ENCODE measurements at regions of chr15 and their contacts with region 1.

Region 1: GRCh38 chr15:45705510-45706473 is 71.0 kb downstream of the SQOR start:
- DNase-seq: peak; percentile 68 to 81 (median 70)
- ATAC-seq: peak; percentile 88 to 96 (median 92)
- H3K4me3 ChIP-seq: peak overlapping the region; percentile 16 to 58 (median 52)
- H3K27ac ChIP-seq: no peak overlapping the region
- H3K4me1 ChIP-seq: no peaks in the 10 kb centered on the region
- H3K27me3 ChIP-seq: no peaks in the 10 kb centered on the region
- CTCF ChIP-seq: peak; percentile 85 to 92 (median 91)
- POLR2A ChIP-seq: no peak

Region 2: GRCh38 chr15:45780352-45780751 is 74.6 kb after region 1 on chr15:
- intact Hi-C with region 1: loop called in 1 of 2 experiments (anchors 10 kb)
- DNase-seq: no peak
- ATAC-seq: no peak
- H3K4me3 ChIP-seq: no peak overlapping the region
- H3K27ac ChIP-seq: no peak overlapping the region
- H3K4me1 ChIP-seq: no peaks in the 10 kb centered on the region
- H3K27me3 ChIP-seq: no peaks in the 10 kb centered on the region
- CTCF ChIP-seq: no peak
- POLR2A ChIP-seq: no peak